ENCODE measurements at regions of chr3 and their contacts with region 1.

Region 1: DNA sequence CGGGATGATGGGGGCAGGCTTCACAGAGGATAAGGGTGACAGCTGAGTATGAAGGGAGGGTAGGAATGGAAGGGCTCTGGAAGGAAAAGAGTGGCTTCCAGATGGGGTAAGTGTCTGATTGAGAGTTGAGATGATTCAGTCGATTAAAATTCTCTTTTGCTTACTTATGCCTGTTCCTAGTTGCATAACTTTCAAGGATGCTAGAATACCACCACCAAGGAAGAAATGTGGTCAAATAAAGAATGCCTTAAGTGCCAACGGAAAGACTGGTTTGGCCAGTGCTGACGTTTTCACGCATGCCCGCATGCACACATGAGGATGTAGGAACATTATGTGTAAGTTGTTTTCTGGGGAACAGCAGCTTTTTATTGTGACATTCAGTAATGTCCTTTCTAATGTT is 263.4 kb upstream of the WNT5A start:
- DNase-seq: peak; percentile 75 to 97
- H3K4me3 ChIP-seq: no peak overlapping the region
- H3K27ac ChIP-seq: peak overlapping the region; percentile 74
- H3K4me1 ChIP-seq: peaks cover 20% of the 10 kb centered on the region
- H3K27me3 ChIP-seq: no peaks in the 10 kb centered on the region
- CTCF ChIP-seq: no peak

Region 2: GRCh38 chr3:55122279-55122678 is 628.2 kb before region 1 on chr3:
- CTCF ChIA-PET with region 1: no interaction called
- POLR2A ChIA-PET with region 1: no interaction called
- intact Hi-C with region 1: no loop called
- DNase-seq: no peak
- H3K4me3 ChIP-seq: no peak overlapping the region
- H3K27ac ChIP-seq: no peak overlapping the region
- H3K4me1 ChIP-seq: peaks cover under 1% of the 10 kb centered on the region; the same call in 1 of the 2 replicates
- H3K27me3 ChIP-seq: no peaks in the 10 kb centered on the region
- CTCF ChIP-seq: no peak

Region 3: DNA sequence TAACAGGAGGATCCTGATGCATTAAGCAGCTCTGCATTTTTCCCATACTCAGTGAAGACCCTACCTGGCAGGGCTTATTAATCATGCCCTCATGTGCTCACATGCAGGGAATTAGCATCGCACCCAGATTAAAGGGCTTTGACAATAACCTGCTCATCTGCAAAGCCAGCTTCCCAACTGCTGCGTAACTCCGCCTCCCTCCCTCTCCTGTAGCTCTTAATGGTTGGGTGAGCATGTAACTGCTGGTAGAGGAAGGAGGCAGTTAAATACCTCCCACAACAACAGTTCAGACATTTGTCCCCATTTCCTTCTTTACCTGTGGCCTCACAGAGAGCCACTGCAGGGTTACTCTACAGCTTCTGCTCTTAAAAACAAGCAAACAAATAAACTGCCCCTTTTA is 59.8 kb before region 1 on chr3:
- CTCF ChIA-PET with region 1: no interaction called
- POLR2A ChIA-PET with region 1: no interaction called
- intact Hi-C with region 1: no loop called
- DNase-seq: no peak
- H3K4me3 ChIP-seq: no peak overlapping the region
- H3K27ac ChIP-seq: no peak overlapping the region
- H3K4me1 ChIP-seq: peaks cover 10% of the 10 kb centered on the region
- H3K27me3 ChIP-seq: no peaks in the 10 kb centered on the region
- CTCF ChIP-seq: no peak

Region 4: DNA sequence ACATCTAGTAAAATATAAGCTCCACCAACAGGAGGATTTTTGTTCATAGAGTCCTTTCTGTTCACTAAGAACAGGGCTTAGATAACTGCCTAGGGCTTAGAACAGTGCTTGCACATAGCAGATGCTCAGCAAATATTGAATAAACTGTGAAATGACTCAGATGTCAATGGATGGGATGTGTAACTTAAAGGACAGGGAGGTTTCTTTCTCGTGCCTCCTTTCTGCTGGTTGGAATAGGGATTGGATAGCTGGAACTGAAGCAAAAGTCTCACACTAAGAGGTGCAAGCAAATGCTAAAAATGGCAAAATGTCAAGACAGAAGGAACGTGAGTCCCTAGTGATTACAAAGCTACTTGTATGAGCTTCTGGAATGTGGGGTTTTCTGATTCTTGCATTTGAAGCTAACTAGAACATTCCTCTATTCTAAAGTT is 129.4 kb after region 1 on chr3:
- CTCF ChIA-PET with region 1: no interaction called
- POLR2A ChIA-PET with region 1: no interaction called
- intact Hi-C with region 1: loop called (anchors 5 kb)
- DNase-seq: peak in 1 of 2 experiments; percentile 70
- H3K4me3 ChIP-seq: no peak overlapping the region
- H3K27ac ChIP-seq: peak overlapping the region; percentile 58
- H3K4me1 ChIP-seq: peaks cover 36% of the 10 kb centered on the region
- H3K27me3 ChIP-seq: no peaks in the 10 kb centered on the region
- CTCF ChIP-seq: no peak

Measured in PC-9 (cell line).